Right lobe of liver (tissue), 6 donors: ENCODE measurements at regions of chr2 and their contacts with region 1.

Region 1: DNA sequence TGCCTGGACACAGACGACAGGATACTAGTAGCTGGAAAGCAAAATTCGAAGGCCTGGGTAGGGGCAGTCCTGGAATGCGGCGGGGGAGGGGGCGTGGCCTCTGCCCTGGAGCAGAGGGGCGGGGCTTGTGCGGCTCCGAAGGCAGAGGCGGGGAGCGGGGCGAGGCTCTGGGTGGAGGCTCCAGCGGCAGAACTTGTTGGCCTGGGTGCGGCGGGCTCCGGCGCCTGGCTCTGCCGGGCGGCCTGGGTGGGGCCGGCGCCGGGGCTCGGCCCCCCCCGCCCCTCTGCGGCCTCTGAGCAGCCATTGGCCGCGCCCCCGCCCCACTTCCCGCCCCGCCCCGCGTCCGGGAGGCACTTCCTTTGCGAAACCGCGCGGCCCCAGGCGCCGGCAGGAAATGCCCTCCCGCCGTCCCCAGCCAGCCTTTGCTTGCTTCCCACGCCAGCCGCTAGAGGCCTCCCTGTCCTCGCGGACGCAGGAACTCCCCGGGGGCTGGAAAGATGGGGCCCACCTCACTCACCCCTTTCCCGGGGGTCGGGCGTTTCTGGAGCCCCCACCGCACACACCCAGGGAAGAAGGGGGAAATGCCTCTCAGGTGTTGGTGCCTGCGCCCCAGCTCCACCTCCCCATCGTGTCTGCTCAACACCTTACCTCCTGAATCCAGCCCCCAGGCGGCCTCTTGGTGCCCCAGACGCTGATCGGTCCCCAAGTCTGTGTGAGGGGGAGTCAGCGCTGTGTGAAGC is 6.7 kb downstream of the CTDSP1 start:
- DNase-seq: peak; percentile 98 to 99 (median 99)
- ATAC-seq: peak; percentile 85 to 94 (median 88)
- H3K4me3 ChIP-seq: peak overlapping the region; percentile 40 to 56 (median 53)
- H3K27ac ChIP-seq: peak overlapping the region; percentile 77 to 82 (median 79)
- H3K4me1 ChIP-seq: peaks cover 0 to 44% (median 21%) of the 10 kb centered on the region in 4 donors
- H3K27me3 ChIP-seq: no peaks in the 10 kb centered on the region
- CTCF ChIP-seq: peak; percentile 79 to 83 (median 81)
- POLR2A ChIP-seq: peak; percentile 56

Region 2: DNA sequence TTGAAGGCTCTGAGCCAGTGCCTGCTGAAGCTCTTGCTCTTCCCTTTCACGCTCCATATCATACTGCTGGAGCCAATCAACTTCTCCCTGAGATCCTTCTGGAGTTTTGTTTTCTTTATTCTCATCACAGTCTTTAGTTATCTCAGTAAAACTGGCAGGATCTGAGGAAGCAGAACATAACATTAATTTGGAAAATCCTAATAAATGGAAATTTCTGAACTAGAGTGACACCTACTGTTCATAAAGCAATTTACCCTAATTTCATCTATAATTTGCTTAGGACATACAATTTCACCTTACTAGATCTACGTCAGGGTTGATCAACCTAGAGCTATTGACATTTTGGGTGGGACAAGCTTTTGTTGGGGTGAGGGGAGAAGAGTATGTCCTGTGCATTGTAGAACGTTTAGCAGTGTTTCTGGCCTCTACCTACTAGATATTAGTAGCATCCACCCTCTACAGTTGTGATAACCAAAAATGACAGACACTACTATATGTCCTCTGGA is 59.7 kb after region 1 on chr2:
- intact Hi-C with region 1: loop called (anchors 5 to 10 kb)
- DNase-seq: no peak
- ATAC-seq: peak; percentile 64 to 85 (median 82)
- H3K4me3 ChIP-seq: no peak overlapping the region
- H3K27ac ChIP-seq: no peak overlapping the region
- H3K4me1 ChIP-seq: no peaks in the 10 kb centered on the region
- H3K27me3 ChIP-seq: no peaks in the 10 kb centered on the region
- CTCF ChIP-seq: peak; percentile 50 to 67 (median 56)
- POLR2A ChIP-seq: no peak

Region 3: DNA sequence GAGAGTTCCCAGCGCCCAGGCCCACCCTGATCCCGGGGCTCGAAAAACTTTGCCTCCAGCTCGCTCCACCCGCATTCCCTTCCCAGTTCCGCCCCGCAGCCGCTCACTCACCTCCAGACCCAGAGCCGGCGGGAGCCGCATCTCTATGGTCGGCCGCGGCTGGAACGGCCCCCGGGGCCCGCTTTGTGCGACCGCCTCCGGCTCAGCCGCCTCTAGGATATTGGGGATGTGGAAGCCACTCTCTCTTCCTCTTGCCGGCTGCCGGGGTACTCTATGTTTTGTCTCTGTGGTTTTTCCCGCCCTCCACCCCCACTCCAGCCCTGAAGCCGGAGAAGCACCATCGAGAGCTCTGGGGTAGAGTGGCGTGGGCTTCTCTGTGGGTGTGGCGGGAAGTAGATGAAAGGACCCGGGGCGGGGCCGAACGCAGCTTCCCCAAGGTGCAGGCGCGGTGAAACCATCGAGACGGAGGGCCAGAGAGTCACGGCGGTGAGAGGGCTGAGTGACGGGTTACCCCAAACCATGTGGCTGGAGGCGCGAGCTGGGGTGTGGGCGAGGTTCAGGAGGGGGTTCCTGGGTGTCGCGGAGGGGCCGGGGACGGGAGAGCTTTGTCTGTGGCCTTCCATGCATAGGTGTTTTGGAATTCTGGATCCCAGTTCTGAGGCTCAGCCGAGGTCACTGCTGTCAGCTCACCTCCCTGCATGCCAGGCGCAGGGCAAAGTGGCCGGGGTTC is 253.0 kb after region 1 on chr2 and contains the starts of genes BCS1L and ZNF142:
- intact Hi-C with region 1: loop called in 1 of 2 experiments (anchors 10 kb)
- DNase-seq: peak; percentile 92 to 95 (median 95)
- ATAC-seq: peak; percentile 99
- H3K4me3 ChIP-seq: peak within 1 kb of the TSS; percentile 70 to 97 (median 72)
- H3K27ac ChIP-seq: peak within 1 kb of the TSS in 2 of 3 donors; percentile 8 to 42
- H3K4me1 ChIP-seq: peaks cover 0 to 18% (median 3%) of the 10 kb centered on the region in 4 donors
- H3K27me3 ChIP-seq: no peaks in the 10 kb centered on the region
- CTCF ChIP-seq: no peak
- POLR2A ChIP-seq: peak; percentile 54
- total RNA-seq, gene BCS1L: 19.7 to 34.1 (median 28.0) TPM
- total RNA-seq, gene ZNF142: 7.1 to 12.5 (median 7.5) TPM